HCT116 (cell line): ENCODE measurements at regions of chr1 and their contacts with region 1.

Region 1: DNA sequence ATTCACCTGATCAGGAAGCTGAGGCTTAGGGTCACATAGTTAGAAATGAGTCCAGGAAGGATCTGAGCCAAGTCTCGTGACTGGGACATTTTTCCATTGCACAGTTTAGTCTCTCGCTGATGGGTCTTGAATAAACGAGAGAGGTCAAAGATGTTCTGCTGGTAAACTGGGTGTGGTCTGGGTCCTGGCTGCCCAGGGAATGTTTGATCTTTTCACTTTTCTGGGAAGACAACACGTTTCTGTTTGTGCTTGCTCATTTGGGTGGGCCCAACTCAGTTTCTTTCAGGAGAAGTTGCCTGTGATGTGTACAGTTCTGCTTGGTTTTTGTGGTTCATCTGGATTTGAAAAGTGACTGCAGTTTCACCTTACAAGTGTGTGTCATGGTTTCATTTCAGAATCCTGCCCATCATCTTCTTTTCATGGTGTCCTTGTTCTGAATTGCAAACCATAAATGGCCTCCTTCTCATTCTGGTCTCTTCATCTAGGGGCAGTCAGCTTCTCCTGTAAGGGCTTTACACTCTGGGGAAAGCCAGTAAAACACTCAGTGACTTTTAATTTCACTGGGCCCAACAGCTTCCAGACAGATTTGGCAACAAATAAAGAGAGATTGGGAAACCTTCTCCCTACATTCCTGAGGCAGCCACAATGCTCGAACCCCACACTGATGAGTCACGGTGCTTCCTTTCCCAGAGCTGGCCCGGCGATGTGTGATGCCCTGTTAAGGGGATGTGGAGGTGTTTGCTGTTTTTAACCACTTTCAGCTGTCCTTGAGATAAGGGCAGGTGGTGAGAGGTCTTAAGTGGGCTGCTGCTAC is 7.2 kb upstream of the TACSTD2 start:
- DNase-seq: peak; percentile 87
- ATAC-seq: peak; percentile 85
- H3K4me3 ChIP-seq: peak overlapping the region; percentile 20 to 36
- H3K27ac ChIP-seq: peak overlapping the region; percentile 84
- H3K4me1 ChIP-seq: peaks cover 32 to 64% of the 10 kb centered on the region in 2 experiments
- H3K27me3 ChIP-seq: no peaks in the 10 kb centered on the region
- CTCF ChIP-seq: no peak
- POLR2A ChIP-seq: no peak
- RAD21 ChIP-seq: peak; percentile 23

Region 2: DNA sequence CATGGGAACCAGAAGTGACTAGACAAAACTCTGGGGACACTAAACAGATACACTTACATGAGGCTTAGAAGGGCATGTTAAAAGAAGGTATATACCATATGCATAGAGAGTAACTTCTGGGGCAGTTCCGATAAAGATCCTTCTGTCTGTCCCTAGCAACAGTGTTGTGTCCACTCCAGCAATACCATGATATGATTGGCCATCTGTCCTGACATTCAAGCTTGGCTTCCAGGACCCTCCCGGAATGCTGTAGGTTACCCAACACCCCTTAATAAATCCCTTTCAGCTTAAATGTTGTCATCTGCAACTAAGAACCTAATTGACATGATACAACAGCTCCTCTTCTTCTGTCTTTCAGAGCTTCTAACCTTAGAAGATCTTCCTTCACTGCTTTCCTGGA is 345.4 kb before region 1 on chr1:
- CTCF ChIA-PET with region 1: no interaction called
- POLR2A ChIA-PET with region 1: no interaction called
- RAD21 ChIA-PET with region 1: no interaction called
- intact Hi-C with region 1: no loop called
- DNase-seq: no peak
- ATAC-seq: no peak
- H3K4me3 ChIP-seq: no peak overlapping the region
- H3K27ac ChIP-seq: no peak overlapping the region
- H3K4me1 ChIP-seq: no peaks in the 10 kb centered on the region
- H3K27me3 ChIP-seq: peaks cover 47% of the 10 kb centered on the region
- CTCF ChIP-seq: no peak
- POLR2A ChIP-seq: no peak
- RAD21 ChIP-seq: no peak

Region 3: GRCh38 chr1:58546520-58547308 is 37.6 kb before region 1 on chr1 and contains the start of gene OMA1:
- CTCF ChIA-PET with region 1: interaction called, 3 read pairs
- POLR2A ChIA-PET with region 1: interaction called, 3 read pairs
- RAD21 ChIA-PET with region 1: no interaction called
- intact Hi-C with region 1: loop called (anchors 2 kb)
- DNase-seq: peak; percentile 89
- ATAC-seq: peak; percentile 95
- H3K4me3 ChIP-seq: peak within 1 kb of the TSS; percentile 70 to 91
- H3K27ac ChIP-seq: peak within 1 kb of the TSS; percentile 86
- H3K4me1 ChIP-seq: peaks cover 6 to 17% of the 10 kb centered on the region in 2 experiments; a peak in 3 of 4 replicates
- H3K27me3 ChIP-seq: no peaks in the 10 kb centered on the region
- CTCF ChIP-seq: peak; percentile 89 to 97 (median 92)
- POLR2A ChIP-seq: peak; percentile 31
- RAD21 ChIP-seq: peak; percentile 96
- total RNA-seq, gene OMA1: 21.9 TPM

Region 4: GRCh38 chr1:58633121-58633520 is 48.8 kb after region 1 on chr1:
- CTCF ChIA-PET with region 1: no interaction called
- POLR2A ChIA-PET with region 1: no interaction called
- RAD21 ChIA-PET with region 1: no interaction called
- intact Hi-C with region 1: no loop called
- DNase-seq: no peak
- ATAC-seq: no peak
- H3K4me3 ChIP-seq: no peak overlapping the region
- H3K27ac ChIP-seq: no peak overlapping the region
- H3K4me1 ChIP-seq: peaks cover 0 to 9% of the 10 kb centered on the region in 2 experiments; a peak in 2 of 4 replicates
- H3K27me3 ChIP-seq: no peaks in the 10 kb centered on the region
- CTCF ChIP-seq: no peak
- POLR2A ChIP-seq: no peak
- RAD21 ChIP-seq: no peak